ENCODE measurements at regions of chr11 and their contacts with region 1.

Region 1: DNA sequence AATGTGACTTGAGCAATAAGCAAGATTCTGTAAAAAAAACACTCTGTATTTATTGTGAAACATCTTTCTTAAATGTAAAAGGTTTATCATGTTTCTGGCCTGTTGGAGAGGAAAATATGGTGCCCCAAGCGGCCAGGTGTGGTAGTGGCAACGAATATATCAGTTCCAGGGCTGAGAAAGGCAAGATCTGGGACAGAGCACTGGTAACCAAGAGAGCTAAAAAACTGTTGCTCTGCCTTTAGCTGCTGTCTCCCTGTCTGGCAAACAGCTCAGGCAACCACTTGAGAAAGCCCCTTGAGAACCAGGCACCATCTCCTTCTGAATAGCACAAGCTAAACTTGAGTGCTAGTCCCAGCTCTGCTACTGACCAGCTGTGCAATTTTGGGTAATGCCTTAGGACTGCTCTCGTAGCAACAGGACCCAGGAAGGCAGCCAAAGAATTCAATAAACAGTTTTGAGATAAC is 129.9 kb downstream of the KCNC1 start:
- DNase-seq: no peak
- H3K4me3 ChIP-seq: no peak overlapping the region
- H3K4me3 Mint-ChIP-seq: no peak overlapping the region
- H3K27ac ChIP-seq: no peak overlapping the region
- H3K27ac Mint-ChIP-seq: no peak overlapping the region
- H3K4me1 ChIP-seq: no peaks in the 10 kb centered on the region
- H3K4me1 Mint-ChIP-seq: peaks cover 0 to 4% (median under 1%) of the 10 kb centered on the region in 4 donors
- H3K27me3 ChIP-seq: no peaks in the 10 kb centered on the region
- H3K27me3 Mint-ChIP-seq: no peaks in the 10 kb centered on the region

Region 2: DNA sequence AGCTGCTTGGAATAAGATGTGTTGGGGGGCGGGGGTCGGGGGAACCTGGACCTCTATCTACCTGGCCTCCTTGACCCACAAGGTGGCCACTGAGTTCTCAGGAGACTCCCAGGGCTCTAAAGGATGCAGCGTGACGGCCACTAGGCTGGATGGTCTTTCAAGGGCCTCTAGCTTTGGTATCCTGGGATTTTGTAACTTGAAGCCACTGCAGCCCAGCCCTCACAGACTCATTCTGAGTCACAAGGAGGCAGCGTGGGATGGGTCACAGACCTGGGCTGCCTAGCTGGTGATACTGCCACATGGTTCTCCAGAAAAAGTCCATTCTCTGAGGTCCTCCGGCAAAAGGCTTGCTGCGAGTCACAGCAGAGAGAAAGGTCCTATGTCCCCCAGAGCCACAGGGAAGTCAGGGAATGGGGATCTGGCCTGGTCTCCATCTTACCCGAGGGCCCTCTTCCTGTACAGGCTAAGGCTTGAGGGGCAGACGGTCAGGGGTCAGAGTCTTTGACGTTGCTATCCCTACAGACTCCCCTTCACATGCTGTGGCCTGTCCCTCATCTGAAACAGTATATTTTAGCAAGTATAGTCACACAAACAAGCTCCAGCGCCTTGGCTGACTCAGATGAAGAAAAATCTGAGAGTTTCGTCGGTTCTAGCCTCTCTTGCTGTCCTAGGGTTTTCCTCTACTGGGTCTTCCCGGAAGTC is 77.5 kb before region 1 on chr11:
- CTCF ChIA-PET with region 1: no interaction called
- POLR2A ChIA-PET with region 1: no interaction called
- intact Hi-C with region 1: no loop called
- DNase-seq: no peak
- H3K4me3 ChIP-seq: no peak overlapping the region
- H3K4me3 Mint-ChIP-seq: no peak overlapping the region
- H3K27ac ChIP-seq: no peak overlapping the region
- H3K27ac Mint-ChIP-seq: no peak overlapping the region
- H3K4me1 ChIP-seq: no peaks in the 10 kb centered on the region
- H3K4me1 Mint-ChIP-seq: no peaks in the 10 kb centered on the region
- H3K27me3 ChIP-seq: no peaks in the 10 kb centered on the region
- H3K27me3 Mint-ChIP-seq: no peaks in the 10 kb centered on the region

Region 3: DNA sequence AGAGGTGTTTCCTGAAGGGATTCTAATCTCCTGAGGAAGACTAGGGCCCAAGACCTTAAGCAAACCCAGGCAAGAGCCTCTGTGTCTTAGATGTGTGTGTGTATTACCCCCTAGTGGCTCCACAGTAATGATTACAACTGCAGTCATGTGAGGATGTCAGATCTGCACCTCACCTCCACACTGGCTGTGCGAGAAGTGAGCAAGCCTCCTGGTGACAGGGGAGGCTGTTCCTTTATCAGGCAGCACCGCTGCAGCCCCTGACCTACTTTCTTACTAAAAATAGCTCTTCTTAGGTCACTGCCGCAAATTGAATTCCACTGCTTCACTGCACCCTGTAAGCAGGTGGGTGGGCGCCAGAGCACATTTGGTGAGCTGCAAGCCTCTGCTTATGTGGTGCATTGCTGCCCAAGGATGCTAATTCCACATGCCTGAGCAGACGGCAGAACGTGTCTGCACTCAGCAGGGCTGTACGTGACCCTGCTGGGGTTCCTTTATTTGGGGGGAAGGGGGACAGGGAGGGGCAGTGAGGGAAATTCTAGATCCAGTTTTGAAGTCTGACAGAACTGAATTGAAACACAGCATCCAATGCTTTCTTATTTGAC is 17.6 kb before region 1 on chr11:
- CTCF ChIA-PET with region 1: interaction called, 17 read pairs
- POLR2A ChIA-PET with region 1: no interaction called
- intact Hi-C with region 1: no loop called
- DNase-seq: no peak
- H3K4me3 ChIP-seq: no peak overlapping the region
- H3K4me3 Mint-ChIP-seq: no peak overlapping the region
- H3K27ac ChIP-seq: no peak overlapping the region
- H3K27ac Mint-ChIP-seq: peak overlapping the region in 2 of 7 donors; percentile 13 to 26
- H3K4me1 ChIP-seq: no peaks in the 10 kb centered on the region
- H3K4me1 Mint-ChIP-seq: no peaks in the 10 kb centered on the region
- H3K27me3 ChIP-seq: no peaks in the 10 kb centered on the region
- H3K27me3 Mint-ChIP-seq: no peaks in the 10 kb centered on the region